A549 (cell line): ENCODE measurements at regions of chr17 and their contacts with region 1.

Region 1: GRCh38 chr17:69523244-69523861 is 108.9 kb downstream of the MAP2K6 start:
- DNase-seq: peak; percentile 28 to 72
- ATAC-seq: peak; percentile 80 to 88
- H3K4me3 ChIP-seq: no peak overlapping the region
- H3K27ac ChIP-seq: no peak overlapping the region
- H3K4me1 ChIP-seq: no peaks in the 10 kb centered on the region
- CTCF ChIP-seq: peak; percentile 82
- EP300 ChIP-seq: no peak
- POLR2A ChIP-seq: no peak
- RAD21 ChIP-seq: peak; percentile 88

Region 2: GRCh38 chr17:69103557-69104233 is 419.7 kb before region 1 on chr17:
- CTCF ChIA-PET with region 1: no interaction called
- POLR2A ChIA-PET with region 1: no interaction called
- DNase-seq: no peak
- ATAC-seq: no peak
- H3K4me3 ChIP-seq: no peak overlapping the region
- H3K27ac ChIP-seq: no peak overlapping the region
- H3K4me1 ChIP-seq: no peaks in the 10 kb centered on the region
- CTCF ChIP-seq: no peak
- EP300 ChIP-seq: no peak
- POLR2A ChIP-seq: no peak
- RAD21 ChIP-seq: no peak

Region 3: DNA sequence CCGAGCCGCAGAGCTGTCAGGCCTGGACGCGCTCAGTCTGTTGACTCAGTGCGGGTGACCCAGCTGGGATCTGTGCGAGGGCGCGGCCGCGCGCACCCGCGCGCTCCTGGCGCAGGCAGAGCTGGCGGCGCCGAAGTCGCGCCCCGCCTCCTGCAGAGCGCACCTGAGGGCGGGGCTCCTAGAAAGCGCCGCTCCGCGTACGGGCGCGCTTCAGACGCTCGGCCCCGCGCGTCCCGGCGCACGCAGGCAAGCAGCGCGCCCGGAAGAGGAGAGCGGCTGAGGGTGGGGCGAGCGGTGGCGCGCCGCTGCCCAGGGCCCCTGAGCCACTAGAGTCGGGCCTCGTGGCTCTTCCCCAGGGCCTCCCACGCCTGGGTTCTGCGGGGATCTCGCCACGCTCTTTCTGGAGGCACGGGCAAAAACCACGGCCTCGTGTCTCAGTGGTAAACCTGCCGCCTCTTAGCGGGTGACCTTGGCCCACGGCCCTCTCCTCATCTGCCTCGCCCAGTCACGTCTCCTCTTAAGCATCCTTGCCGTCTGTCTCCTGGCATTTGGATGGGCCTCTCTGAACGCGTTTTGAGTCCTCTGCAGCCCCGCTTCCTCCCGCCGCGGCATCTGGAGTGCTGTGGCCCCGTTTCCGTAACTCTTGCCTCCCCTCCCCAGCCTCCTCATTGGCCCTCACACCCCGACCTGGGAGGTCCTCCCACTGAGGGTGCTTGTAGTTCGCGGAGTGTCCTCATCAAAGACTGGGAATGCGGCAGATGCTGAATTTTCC is 196.1 kb before region 1 on chr17 and contains the start of gene ABCA5:
- CTCF ChIA-PET with region 1: interaction called, 11 read pairs
- POLR2A ChIA-PET with region 1: interaction called, 3 read pairs
- DNase-seq: peak; percentile 93
- ATAC-seq: peak; percentile 94 to 97
- H3K4me3 ChIP-seq: peak within 1 kb of the TSS; percentile 76
- H3K27ac ChIP-seq: peak within 1 kb of the TSS; percentile 84 to 92
- H3K4me1 ChIP-seq: peaks cover 6% of the 10 kb centered on the region; the same call in 2 of the 3 replicates
- CTCF ChIP-seq: no peak; the same call in 2 of the 3 replicates
- EP300 ChIP-seq: no peak
- POLR2A ChIP-seq: peak; percentile 90
- RAD21 ChIP-seq: no peak; a peak in 1 of 5 replicates
- polyA plus RNA-seq, gene ABCA5: 6.9 and 9.1 TPM in 2 replicates

Region 4: DNA sequence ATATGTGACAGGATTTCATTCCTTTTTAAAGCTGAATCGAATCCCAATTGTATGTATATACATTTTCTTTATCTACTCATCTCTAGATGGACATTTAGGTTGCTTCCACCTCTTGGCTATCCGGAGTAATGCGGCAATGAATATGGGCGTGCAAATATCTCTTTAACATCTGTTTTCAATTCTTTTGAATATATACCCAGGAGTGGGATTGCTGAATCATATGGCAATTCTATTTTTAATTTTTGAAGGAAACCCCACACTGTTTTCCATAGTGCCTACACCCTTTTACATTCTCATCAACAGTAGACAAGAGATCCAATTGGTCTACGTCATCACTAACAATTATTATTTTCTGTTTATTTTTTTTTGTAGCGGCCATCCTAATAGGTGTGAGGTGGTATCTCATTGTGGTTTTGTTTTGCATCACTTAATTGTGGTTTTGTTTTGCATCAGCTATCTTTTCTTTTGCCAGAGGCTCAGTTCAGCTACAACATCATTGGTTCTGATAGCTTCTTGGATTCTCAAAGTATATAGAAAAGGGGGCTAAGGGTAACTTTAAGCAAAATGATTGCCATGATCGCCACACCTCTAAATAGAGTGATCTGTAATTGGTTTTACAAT is 134.4 kb before region 1 on chr17:
- CTCF ChIA-PET with region 1: interaction called, 28 read pairs
- POLR2A ChIA-PET with region 1: no interaction called
- DNase-seq: no peak
- ATAC-seq: no peak
- H3K4me3 ChIP-seq: no peak overlapping the region
- H3K27ac ChIP-seq: no peak overlapping the region
- H3K4me1 ChIP-seq: peaks cover 13% of the 10 kb centered on the region; the same call in 2 of the 3 replicates
- CTCF ChIP-seq: no peak
- EP300 ChIP-seq: no peak
- POLR2A ChIP-seq: no peak
- RAD21 ChIP-seq: no peak

Region 5: GRCh38 chr17:69539781-69540319 is 16.5 kb after region 1 on chr17:
- CTCF ChIA-PET with region 1: interaction called, 118 read pairs
- POLR2A ChIA-PET with region 1: no interaction called
- DNase-seq: peak in 1 of 2 experiments; percentile 31
- ATAC-seq: peak; percentile 75 to 85
- H3K4me3 ChIP-seq: no peak overlapping the region
- H3K27ac ChIP-seq: peak overlapping the region; percentile 16 to 56; a peak in 4 of 6 replicates
- H3K4me1 ChIP-seq: peaks cover 14% of the 10 kb centered on the region; the same call in 2 of the 3 replicates
- CTCF ChIP-seq: no peak
- EP300 ChIP-seq: no peak
- POLR2A ChIP-seq: no peak
- RAD21 ChIP-seq: no peak

Region 6: GRCh38 chr17:70144260-70144846 is 621.0 kb after region 1 on chr17:
- CTCF ChIA-PET with region 1: interaction called, 12 read pairs
- POLR2A ChIA-PET with region 1: no interaction called
- DNase-seq: peak; percentile 15 to 50
- ATAC-seq: no peak
- H3K4me3 ChIP-seq: no peak overlapping the region
- H3K27ac ChIP-seq: no peak overlapping the region
- H3K4me1 ChIP-seq: no peaks in the 10 kb centered on the region
- CTCF ChIP-seq: peak; percentile 94
- EP300 ChIP-seq: no peak
- POLR2A ChIP-seq: no peak
- RAD21 ChIP-seq: peak; percentile 75 to 90

Region 7: DNA sequence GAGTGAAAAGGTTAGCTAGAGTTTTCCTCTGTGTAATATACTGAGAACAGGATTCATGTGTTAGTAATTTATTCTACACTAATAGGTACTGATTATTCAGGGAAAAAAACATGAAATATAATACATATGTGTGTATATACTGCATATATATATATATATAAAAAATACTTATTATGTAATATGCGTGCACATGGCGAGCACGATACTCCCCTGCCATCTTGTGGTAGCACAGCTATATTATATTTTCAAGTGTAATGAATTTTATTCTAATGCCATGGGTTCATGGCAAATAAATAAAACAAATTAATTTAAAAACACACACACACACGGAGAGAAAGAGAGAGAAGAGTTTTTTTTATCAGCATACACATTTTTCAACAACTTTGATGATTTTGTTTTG is 1106.5 kb after region 1 on chr17:
- CTCF ChIA-PET with region 1: interaction called, 44 read pairs
- POLR2A ChIA-PET with region 1: interaction called, 3 read pairs
- DNase-seq: peak; percentile 24 to 27
- ATAC-seq: no peak
- H3K4me3 ChIP-seq: no peak overlapping the region
- H3K27ac ChIP-seq: no peak overlapping the region
- H3K4me1 ChIP-seq: no peaks in the 10 kb centered on the region
- CTCF ChIP-seq: peak; percentile 78
- EP300 ChIP-seq: no peak
- POLR2A ChIP-seq: no peak
- RAD21 ChIP-seq: peak; percentile 66 to 84